Tibial artery (tissue), 4 donors: ENCODE measurements at regions of chr9 and their contacts with region 1.

Region 1: GRCh38 chr9:112361601-112362000 is 18.3 kb upstream of the HSDL2 start:
- DNase-seq: no peak
- H3K4me3 ChIP-seq: no peak overlapping the region
- H3K27ac ChIP-seq: no peak overlapping the region
- H3K4me1 ChIP-seq: peaks cover 0 to 12% (median 0%) of the 10 kb centered on the region in 4 donors
- H3K27me3 ChIP-seq: no peaks in the 10 kb centered on the region
- CTCF ChIP-seq: peak; percentile 44 to 73

Region 2: DNA sequence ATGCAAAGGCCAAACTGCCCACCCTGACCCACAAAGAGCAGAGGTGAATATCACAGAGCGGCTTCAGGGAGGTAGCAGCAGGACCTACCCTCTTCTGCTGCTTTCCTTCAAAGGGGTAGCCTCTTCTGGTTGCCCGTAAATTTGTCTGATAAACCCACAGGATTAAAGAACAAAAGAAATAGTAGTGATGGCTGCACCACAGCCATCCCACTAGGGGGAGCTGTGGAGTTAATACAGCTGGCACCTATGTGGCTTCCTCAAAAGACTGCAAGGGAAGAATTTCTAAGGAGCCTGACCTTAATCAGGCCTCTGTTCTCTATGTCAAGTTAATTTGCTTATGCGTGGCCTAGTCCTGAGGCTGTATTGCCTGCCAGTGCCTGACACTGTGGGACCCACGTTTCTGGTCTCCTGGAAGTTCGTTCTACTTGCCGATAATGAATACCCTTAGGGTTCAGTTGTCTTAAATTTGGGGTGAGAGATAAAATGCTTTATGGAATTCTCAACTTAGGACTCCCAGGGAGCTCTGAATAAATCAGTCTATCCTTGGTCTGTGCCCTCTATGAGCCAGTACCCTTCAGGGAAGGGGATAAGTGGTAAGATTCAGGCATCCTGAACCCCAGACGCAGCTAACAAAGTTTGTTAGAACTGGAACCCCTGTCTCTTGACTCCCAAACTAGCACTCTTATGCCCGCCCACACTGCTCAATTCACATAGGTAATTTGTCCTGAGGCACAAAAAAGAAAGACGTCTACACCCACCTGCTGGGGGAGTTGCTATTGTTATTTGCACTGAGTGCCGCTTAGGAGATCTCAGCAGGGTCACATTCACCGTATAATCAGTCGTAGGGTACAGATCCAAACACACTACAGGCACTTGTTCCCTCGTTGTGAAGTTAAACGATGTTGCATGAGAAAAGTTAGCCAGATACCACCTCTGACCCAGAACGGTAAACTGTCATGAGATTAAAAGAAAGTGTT is 263.6 kb before region 1 on chr9:
- intact Hi-C with region 1: loop called (anchors 5 kb)
- DNase-seq: peak in 1 of 2 donors; percentile 43
- H3K4me3 ChIP-seq: no peak overlapping the region
- H3K27ac ChIP-seq: no peak overlapping the region
- H3K4me1 ChIP-seq: no peaks in the 10 kb centered on the region
- H3K27me3 ChIP-seq: no peaks in the 10 kb centered on the region
- CTCF ChIP-seq: peak; percentile 83 to 88

Region 3: DNA sequence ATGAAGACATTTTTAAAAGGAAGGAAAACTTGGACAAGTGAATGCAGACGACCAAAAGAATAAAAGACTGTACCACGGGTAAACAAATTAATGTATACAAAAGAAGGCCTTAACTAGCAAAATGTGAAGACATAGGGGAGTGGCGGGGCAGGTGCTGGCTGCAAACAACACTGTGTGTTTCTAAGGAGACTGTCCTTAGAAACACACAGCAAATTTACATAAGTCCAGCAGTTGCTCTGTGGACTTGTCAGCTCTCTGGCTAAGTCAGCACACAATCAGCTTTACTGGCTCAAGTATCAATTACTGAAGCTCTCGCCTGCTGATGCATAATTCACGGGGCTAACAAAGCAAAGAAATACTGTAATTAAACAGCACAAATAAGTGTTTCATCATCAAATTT is 53.0 kb before region 1 on chr9:
- intact Hi-C with region 1: no loop called
- DNase-seq: no peak
- H3K4me3 ChIP-seq: no peak overlapping the region
- H3K27ac ChIP-seq: no peak overlapping the region
- H3K4me1 ChIP-seq: peaks cover 0 to under 1% (median 0%) of the 10 kb centered on the region in 4 donors
- H3K27me3 ChIP-seq: no peaks in the 10 kb centered on the region
- CTCF ChIP-seq: no peak